ENCODE measurements at regions of chr17 and their contacts with region 1.

Region 1: DNA sequence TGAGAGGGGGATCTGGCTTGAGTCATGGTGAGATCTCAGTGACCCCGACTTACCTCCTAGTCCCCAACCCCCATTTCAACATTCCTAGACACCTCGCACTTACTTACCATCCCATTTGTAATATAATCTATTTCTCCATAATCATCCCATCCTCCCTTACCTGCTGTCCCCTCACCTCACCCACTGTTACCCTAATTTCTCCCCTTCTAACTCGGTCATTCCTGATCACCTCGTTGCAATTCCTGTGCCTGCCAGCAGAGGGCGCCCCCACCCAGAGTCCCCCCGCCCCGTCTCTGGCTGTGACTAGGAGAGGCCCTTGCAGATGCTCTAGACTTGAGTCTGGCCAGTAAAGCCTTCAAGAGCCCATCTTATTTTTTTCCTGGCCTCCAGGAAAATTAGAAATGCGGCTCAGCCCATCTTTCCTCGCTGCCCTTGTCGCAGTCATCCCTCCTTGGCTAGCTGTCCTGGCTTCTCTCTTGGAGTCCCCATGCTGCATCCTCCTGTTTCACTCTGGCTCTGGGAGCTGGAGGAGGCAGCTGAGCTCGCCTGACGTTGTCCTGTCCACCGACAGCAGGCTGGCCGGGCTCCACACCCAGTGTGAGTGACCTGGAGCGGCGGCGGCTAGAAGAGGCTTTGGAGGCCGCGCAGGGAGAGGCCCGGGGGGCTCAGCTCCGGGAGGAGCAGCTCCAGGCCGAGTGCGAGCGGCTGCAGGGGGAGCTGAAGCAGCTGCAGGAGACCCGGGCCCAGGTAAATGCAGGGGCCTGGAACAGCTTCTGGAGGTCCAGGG is 5.0 kb downstream of the TBKBP1 start:
- DNase-seq: no peak
- ATAC-seq: peak; percentile 60
- H3K4me3 ChIP-seq: no peak overlapping the region
- H3K27ac ChIP-seq: no peak overlapping the region
- H3K4me1 ChIP-seq: peaks cover 22% of the 10 kb centered on the region
- H3K27me3 ChIP-seq: no peaks in the 10 kb centered on the region; a peak in 1 of 4 replicates
- CTCF ChIP-seq: peak; percentile 86 to 97 (median 88)
- EP300 ChIP-seq: no peak
- POLR2A ChIP-seq: no peak
- RAD21 ChIP-seq: peak; percentile 93

Region 2: GRCh38 chr17:47713980-47714700 is 15.2 kb after region 1 on chr17:
- CTCF ChIA-PET with region 1: interaction called, 229 read pairs
- POLR2A ChIA-PET with region 1: interaction called, 76 read pairs
- RAD21 ChIA-PET with region 1: interaction called, 142 read pairs
- SMC1A ChIA-PET with region 1: interaction called, 39 read pairs
- in situ Hi-C with region 1: no loop called
- intact Hi-C with region 1: loop called (anchors 2 kb)
- DNase-seq: no peak
- ATAC-seq: peak; percentile 40
- H3K4me3 ChIP-seq: no peak overlapping the region
- H3K27ac ChIP-seq: no peak overlapping the region
- H3K4me1 ChIP-seq: peaks cover 61% of the 10 kb centered on the region
- H3K27me3 ChIP-seq: no peaks in the 10 kb centered on the region; a peak in 2 of 4 replicates
- CTCF ChIP-seq: peak; percentile 22 to 27 (median 23); a peak in 5 of 6 replicates
- EP300 ChIP-seq: no peak
- POLR2A ChIP-seq: no peak
- RAD21 ChIP-seq: no peak

Region 3: DNA sequence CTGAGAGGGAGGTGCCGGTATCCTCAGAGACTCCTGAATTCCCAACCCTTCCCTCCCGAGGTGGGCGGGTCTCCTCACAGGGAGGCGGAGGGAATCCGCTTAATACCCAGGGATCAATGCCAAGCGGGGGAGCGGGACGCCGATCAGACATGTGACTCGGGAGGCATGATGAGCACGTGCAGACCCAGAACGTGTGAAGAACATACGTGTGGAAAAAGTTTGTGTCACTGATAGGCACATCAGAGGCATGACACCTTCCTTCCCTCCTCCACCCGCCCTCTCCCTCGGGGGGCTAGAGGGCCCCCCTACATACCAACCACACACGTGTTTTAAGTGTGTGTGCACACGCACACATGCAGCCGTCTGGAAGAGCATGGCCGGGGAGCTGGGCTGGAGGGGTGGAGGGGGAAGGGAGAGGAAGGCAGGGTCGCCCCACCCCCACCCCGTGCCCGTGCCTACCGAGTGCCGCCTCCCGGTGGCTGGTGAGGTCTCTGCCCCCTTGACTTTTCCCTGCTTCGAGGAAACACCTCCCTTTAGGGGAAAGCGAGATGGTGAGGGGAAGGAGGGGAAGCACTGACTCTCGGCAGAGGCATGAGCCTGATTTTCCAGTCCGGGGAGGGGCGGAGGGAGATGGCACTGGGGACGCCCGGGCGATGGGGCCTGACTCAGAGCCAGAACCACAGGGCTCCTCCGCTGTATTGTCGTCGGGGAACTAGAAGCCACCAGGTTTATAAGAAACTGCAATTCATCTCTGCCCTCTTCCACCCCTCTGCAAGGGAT is 22.0 kb after region 1 on chr17:
- CTCF ChIA-PET with region 1: interaction called, 229 read pairs
- POLR2A ChIA-PET with region 1: interaction called, 76 read pairs
- RAD21 ChIA-PET with region 1: interaction called, 142 read pairs
- SMC1A ChIA-PET with region 1: interaction called, 39 read pairs
- in situ Hi-C with region 1: no loop called
- intact Hi-C with region 1: loop called (anchors 2 kb)
- DNase-seq: no peak
- ATAC-seq: peak; percentile 71
- H3K4me3 ChIP-seq: no peak overlapping the region
- H3K27ac ChIP-seq: no peak overlapping the region
- H3K4me1 ChIP-seq: peaks cover 63% of the 10 kb centered on the region
- H3K27me3 ChIP-seq: peaks cover 0 to 5% of the 10 kb centered on the region in 2 experiments; a peak in 3 of 4 replicates
- CTCF ChIP-seq: no peak
- EP300 ChIP-seq: no peak
- POLR2A ChIP-seq: no peak
- RAD21 ChIP-seq: no peak

Region 4: GRCh38 chr17:47733047-47733673 is 34.2 kb after region 1 on chr17 and contains the start of gene TBX21:
- CTCF ChIA-PET with region 1: interaction called, 242 read pairs
- POLR2A ChIA-PET with region 1: interaction called, 10 read pairs
- RAD21 ChIA-PET with region 1: interaction called, 136 read pairs
- SMC1A ChIA-PET with region 1: interaction called, 31 read pairs
- in situ Hi-C with region 1: no loop called
- intact Hi-C with region 1: loop called (anchors 1 kb)
- DNase-seq: no peak
- ATAC-seq: peak; percentile 80
- H3K4me3 ChIP-seq: peak within 1 kb of the TSS; percentile 92
- H3K27ac ChIP-seq: peak within 1 kb of the TSS; percentile 84
- H3K4me1 ChIP-seq: peaks cover 27% of the 10 kb centered on the region
- H3K27me3 ChIP-seq: 0 out of 4 replicates have a peak, but pooled peaks cover 0 to 1% of the 10 kb centered on the region in 2 experiments
- CTCF ChIP-seq: peak; percentile 34 to 64 (median 52)
- EP300 ChIP-seq: no peak
- POLR2A ChIP-seq: peak; percentile 95
- RAD21 ChIP-seq: peak; percentile 50
- polyA plus RNA-seq, gene TBX21: 0.63 to 1.8 TPM

Region 5: DNA sequence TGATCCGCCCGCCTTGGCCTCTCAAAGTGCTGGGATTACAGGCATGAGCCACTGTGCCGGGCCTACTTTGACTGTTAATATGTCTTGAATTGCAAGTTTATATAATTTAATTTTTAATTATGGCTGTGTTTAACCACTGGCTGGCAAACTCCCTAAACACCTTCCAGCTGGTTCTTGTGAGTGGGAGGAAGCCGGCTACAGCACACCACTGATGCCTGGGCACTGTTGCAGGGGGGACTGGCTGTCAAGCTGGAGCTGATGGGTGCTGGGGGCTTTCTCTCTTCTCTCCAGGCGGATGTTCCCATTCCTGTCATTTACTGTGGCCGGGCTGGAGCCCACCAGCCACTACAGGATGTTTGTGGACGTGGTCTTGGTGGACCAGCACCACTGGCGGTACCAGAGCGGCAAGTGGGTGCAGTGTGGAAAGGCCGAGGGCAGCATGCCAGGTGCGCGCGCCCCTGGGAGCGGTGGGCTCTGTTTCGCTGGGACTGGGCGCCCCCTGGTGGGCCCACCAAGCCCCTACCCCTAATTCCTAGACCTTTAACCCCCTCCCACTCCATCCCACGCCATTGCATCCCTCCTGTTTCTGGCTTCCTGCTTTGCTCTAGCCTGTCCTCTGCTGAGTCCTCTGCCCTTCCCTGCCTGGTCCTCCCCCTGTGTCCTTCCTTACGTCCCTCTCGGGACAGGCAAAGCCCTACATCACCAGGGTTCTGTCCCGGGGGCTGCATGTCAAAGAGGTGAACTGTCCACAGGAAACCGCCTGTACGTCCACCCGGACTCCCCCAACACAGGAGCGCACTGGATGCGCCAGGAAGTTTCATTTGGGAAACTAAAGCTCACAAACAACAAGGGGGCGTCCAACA is 43.6 kb after region 1 on chr17:
- CTCF ChIA-PET with region 1: interaction called, 242 read pairs
- POLR2A ChIA-PET with region 1: interaction called, 4 read pairs
- RAD21 ChIA-PET with region 1: interaction called, 136 read pairs
- SMC1A ChIA-PET with region 1: interaction called, 31 read pairs
- in situ Hi-C with region 1: no loop called
- intact Hi-C with region 1: loop called (anchors 1 kb)
- DNase-seq: no peak
- ATAC-seq: peak; percentile 85
- H3K4me3 ChIP-seq: no peak overlapping the region
- H3K27ac ChIP-seq: no peak overlapping the region
- H3K4me1 ChIP-seq: peaks cover 18% of the 10 kb centered on the region
- H3K27me3 ChIP-seq: no peaks in the 10 kb centered on the region
- CTCF ChIP-seq: peak; percentile 46 to 59 (median 55)
- EP300 ChIP-seq: no peak
- POLR2A ChIP-seq: no peak
- RAD21 ChIP-seq: peak; percentile 66

Region 6: DNA sequence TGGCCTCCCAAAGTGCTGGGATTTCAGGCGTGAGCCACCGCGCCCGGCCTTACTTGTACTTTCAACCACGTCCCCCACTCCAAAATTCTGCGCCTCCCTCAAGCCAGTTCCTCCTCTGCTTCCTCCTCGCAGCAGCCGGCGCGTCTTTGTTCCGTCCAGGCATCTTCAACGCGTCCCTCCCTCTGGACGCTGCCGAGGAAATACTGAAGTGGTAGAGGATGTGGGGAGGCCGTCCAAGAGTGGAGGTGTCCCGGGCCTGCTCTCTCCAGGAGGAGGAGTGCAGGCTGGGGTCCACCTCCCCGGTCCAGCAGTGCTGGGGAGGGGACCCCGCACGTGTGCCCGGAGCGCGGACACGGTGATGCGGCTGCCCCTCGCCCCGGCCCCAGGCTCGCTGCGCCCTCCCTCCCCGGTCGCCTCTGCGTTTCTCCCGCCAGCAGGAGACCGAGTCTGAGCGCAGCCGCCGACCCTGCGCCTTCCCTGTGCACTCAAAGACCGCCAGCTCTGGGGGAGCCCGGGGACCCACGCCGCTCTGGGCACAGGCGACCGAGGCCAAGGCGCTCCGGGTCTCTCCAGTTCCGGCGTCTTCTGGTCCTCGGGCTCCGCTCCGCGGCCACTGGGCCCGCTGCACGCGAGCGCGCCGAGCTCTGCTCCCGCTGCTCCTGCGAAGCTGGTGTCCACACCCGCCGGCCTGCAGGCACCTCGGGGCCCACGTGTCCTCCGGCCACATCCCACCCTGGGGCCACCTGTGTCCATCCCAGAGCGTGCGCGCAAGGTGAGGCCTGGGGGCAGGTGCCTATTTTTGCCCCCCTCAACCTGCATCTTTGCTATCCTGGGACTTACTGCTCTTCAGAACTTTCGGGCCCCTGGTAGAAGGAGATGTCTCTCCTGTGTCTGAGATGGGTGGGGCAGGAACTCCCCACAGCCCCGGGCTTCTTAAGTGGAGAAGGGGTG is 90.9 kb after region 1 on chr17:
- CTCF ChIA-PET with region 1: interaction called, 9 read pairs
- POLR2A ChIA-PET with region 1: no interaction called
- RAD21 ChIA-PET with region 1: interaction called, 10 read pairs
- SMC1A ChIA-PET with region 1: interaction called, 4 read pairs
- in situ Hi-C with region 1: no loop called
- intact Hi-C with region 1: no loop called
- DNase-seq: no peak
- ATAC-seq: peak; percentile 96
- H3K4me3 ChIP-seq: no peak overlapping the region
- H3K27ac ChIP-seq: no peak overlapping the region
- H3K4me1 ChIP-seq: no peaks in the 10 kb centered on the region
- H3K27me3 ChIP-seq: peaks cover 4 to 7% of the 10 kb centered on the region in 2 experiments
- CTCF ChIP-seq: peak; percentile 37 to 63 (median 61)
- EP300 ChIP-seq: no peak
- POLR2A ChIP-seq: no peak
- RAD21 ChIP-seq: peak; percentile 50

Region 7: GRCh38 chr17:47802341-47803022 is 103.5 kb after region 1 on chr17:
- CTCF ChIA-PET with region 1: interaction called, 13 read pairs
- POLR2A ChIA-PET with region 1: interaction called, 3 read pairs
- RAD21 ChIA-PET with region 1: interaction called, 8 read pairs
- SMC1A ChIA-PET with region 1: no interaction called
- in situ Hi-C with region 1: loop called (anchors 10 kb)
- intact Hi-C with region 1: loop called (anchors 1 kb)
- DNase-seq: no peak
- ATAC-seq: peak; percentile 98
- H3K4me3 ChIP-seq: no peak overlapping the region
- H3K27ac ChIP-seq: no peak overlapping the region
- H3K4me1 ChIP-seq: no peaks in the 10 kb centered on the region
- H3K27me3 ChIP-seq: no peaks in the 10 kb centered on the region
- CTCF ChIP-seq: peak; percentile 69 to 83 (median 77)
- EP300 ChIP-seq: no peak
- POLR2A ChIP-seq: no peak
- RAD21 ChIP-seq: peak; percentile 74

Measured in GM12878 (cell line).